ENCODE measurements at regions of chr1 and their contacts with region 1.

Region 1: GRCh38 chr1:205523891-205524793 is 19.7 kb downstream of the CDK18 start:
- DNase-seq: peak in 4 of 5 donors; percentile 61 to 64 (median 63)
- H3K4me3 ChIP-seq: no peak overlapping the region
- H3K4me3 Mint-ChIP-seq: no peak overlapping the region
- H3K27ac ChIP-seq: no peak overlapping the region
- H3K27ac Mint-ChIP-seq: no peak overlapping the region
- H3K4me1 ChIP-seq: no peaks in the 10 kb centered on the region
- H3K4me1 Mint-ChIP-seq: no peaks in the 10 kb centered on the region
- H3K27me3 ChIP-seq: no peaks in the 10 kb centered on the region
- H3K27me3 Mint-ChIP-seq: peaks cover 0 to 3% of the 10 kb centered on the region in 2 donors

Region 2: GRCh38 chr1:205321164-205321958 is 202.8 kb before region 1 on chr1 and contains the start of gene NUAK2:
- CTCF ChIA-PET with region 1: interaction called, 15 read pairs
- POLR2A ChIA-PET with region 1: interaction called, 3 read pairs
- intact Hi-C with region 1: no loop called
- DNase-seq: peak; percentile 80 to 83 (median 81)
- H3K4me3 ChIP-seq: peak within 1 kb of the TSS; percentile 79 to 99
- H3K4me3 Mint-ChIP-seq: peak within 1 kb of the TSS; percentile 95 to 100 (median 98)
- H3K27ac ChIP-seq: peak within 1 kb of the TSS; percentile 74
- H3K27ac Mint-ChIP-seq: peak within 1 kb of the TSS; percentile 83 to 97 (median 90)
- H3K4me1 ChIP-seq: peaks cover 56% of the 10 kb centered on the region
- H3K4me1 Mint-ChIP-seq: peaks cover 49 to 80% (median 68%) of the 10 kb centered on the region in 4 donors
- H3K27me3 ChIP-seq: no peaks in the 10 kb centered on the region
- H3K27me3 Mint-ChIP-seq: no peaks in the 10 kb centered on the region
- total RNA-seq, gene NUAK2: 32.5 to 32.8 TPM

Region 3: GRCh38 chr1:205354259-205354904 is 169.8 kb before region 1 on chr1:
- CTCF ChIA-PET with region 1: interaction called, 73 read pairs
- POLR2A ChIA-PET with region 1: interaction called, 3 read pairs
- intact Hi-C with region 1: loop called (anchors 1 kb)
- DNase-seq: peak; percentile 57 to 70 (median 62)
- H3K4me3 ChIP-seq: no peak overlapping the region
- H3K4me3 Mint-ChIP-seq: no peak overlapping the region
- H3K27ac ChIP-seq: no peak overlapping the region
- H3K27ac Mint-ChIP-seq: no peak overlapping the region
- H3K4me1 ChIP-seq: no peaks in the 10 kb centered on the region
- H3K4me1 Mint-ChIP-seq: no peaks in the 10 kb centered on the region
- H3K27me3 ChIP-seq: peaks cover 4% of the 10 kb centered on the region
- H3K27me3 Mint-ChIP-seq: peaks cover 12 to 16% of the 10 kb centered on the region in 2 donors

Region 4: GRCh38 chr1:205396967-205397616 is 127.0 kb before region 1 on chr1:
- CTCF ChIA-PET with region 1: interaction called, 52 read pairs
- POLR2A ChIA-PET with region 1: no interaction called
- intact Hi-C with region 1: loop called (anchors 1 kb)
- DNase-seq: peak in 4 of 5 donors; percentile 38 to 46 (median 42)
- H3K4me3 ChIP-seq: no peak overlapping the region
- H3K4me3 Mint-ChIP-seq: no peak overlapping the region
- H3K27ac ChIP-seq: no peak overlapping the region
- H3K27ac Mint-ChIP-seq: peak overlapping the region in 1 of 7 donors; percentile 14
- H3K4me1 ChIP-seq: no peaks in the 10 kb centered on the region
- H3K4me1 Mint-ChIP-seq: peaks cover 2 to 9% (median 5%) of the 10 kb centered on the region in 4 donors
- H3K27me3 ChIP-seq: no peaks in the 10 kb centered on the region
- H3K27me3 Mint-ChIP-seq: peaks cover 2 to 10% of the 10 kb centered on the region in 2 donors

Region 5: GRCh38 chr1:205500240-205501233 is 23.6 kb before region 1 on chr1:
- CTCF ChIA-PET with region 1: interaction called, 13 read pairs
- POLR2A ChIA-PET with region 1: no interaction called
- intact Hi-C with region 1: no loop called
- DNase-seq: no peak
- H3K4me3 ChIP-seq: no peak overlapping the region
- H3K4me3 Mint-ChIP-seq: no peak overlapping the region
- H3K27ac ChIP-seq: no peak overlapping the region
- H3K27ac Mint-ChIP-seq: no peak overlapping the region
- H3K4me1 ChIP-seq: peaks cover 9% of the 10 kb centered on the region
- H3K4me1 Mint-ChIP-seq: peaks cover 2 to 14% (median 8%) of the 10 kb centered on the region in 4 donors
- H3K27me3 ChIP-seq: no peaks in the 10 kb centered on the region
- H3K27me3 Mint-ChIP-seq: peaks cover 4% of the 10 kb centered on the region in 2 donors